HepG2 (cell line): ENCODE measurements at regions of chr16 and their contacts with region 1.

Region 1: DNA sequence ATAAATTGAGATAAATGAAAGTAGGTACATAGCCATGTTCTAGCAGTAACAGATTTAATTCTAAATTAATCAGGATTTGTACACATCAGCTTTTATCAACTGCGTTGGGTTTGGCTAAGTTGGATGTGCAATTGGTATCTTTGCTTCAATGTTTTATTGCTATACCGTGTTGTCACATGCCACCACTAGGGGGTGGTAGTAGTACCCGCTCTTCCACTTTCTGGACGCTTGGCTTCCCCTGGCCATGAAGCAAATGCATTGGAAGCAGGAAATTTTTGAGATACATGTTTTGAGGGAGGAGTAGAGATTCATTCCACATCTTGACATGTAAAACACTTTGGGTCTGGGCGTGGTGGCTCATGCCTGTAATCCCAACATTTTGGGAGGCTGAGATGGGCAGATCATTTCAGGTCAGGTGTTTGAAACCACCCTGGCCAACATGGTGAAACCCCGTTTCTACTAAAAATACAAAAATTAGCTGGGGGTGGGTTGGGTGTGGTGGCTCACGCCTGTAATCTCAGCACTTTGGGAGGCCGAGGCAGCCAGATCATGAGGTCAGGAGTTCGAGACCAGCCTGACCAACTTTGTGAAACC is 58.6 kb downstream of the EMP2 start:
- DNase-seq: peak; percentile 79
- ATAC-seq: peak; percentile 42
- H3K4me3 ChIP-seq: no peak overlapping the region
- H3K27ac ChIP-seq: no peak overlapping the region
- H3K4me1 ChIP-seq: peaks cover 27% of the 10 kb centered on the region
- H3K27me3 ChIP-seq: no peaks in the 10 kb centered on the region
- CTCF ChIP-seq: peak; percentile 93
- EP300 ChIP-seq: no peak
- POLR2A ChIP-seq: no peak
- RAD21 ChIP-seq: peak; percentile 58; the same call in 1 of the 2 replicates

Region 2: DNA sequence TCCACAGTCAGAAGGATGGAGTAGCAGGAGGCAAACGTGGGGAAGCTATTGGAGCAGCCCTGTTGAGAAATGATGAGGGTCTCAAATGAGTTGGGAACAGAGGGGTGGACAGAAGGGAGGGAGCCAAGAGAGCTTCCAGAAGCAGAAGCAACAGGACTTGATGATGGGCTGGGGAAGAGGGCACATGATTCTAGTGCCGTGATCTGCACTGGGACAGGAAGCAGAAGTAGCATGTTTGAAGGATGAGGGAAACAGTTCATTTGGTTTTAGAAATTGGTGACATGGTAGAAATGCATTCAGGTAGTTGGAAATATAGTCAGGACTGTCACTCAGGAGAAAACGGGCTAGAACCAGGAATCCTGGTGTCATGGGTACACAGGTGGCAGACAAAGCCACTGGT is 39.2 kb after region 1 on chr16:
- CTCF ChIA-PET with region 1: no interaction called
- POLR2A ChIA-PET with region 1: no interaction called
- in situ Hi-C with region 1: no loop called
- intact Hi-C with region 1: loop called (anchors 5 kb)
- DNase-seq: no peak
- ATAC-seq: no peak
- H3K4me3 ChIP-seq: no peak overlapping the region
- H3K27ac ChIP-seq: no peak overlapping the region
- H3K4me1 ChIP-seq: peaks cover 37% of the 10 kb centered on the region
- H3K27me3 ChIP-seq: no peaks in the 10 kb centered on the region
- CTCF ChIP-seq: no peak
- EP300 ChIP-seq: no peak
- POLR2A ChIP-seq: no peak
- RAD21 ChIP-seq: no peak

Region 3: DNA sequence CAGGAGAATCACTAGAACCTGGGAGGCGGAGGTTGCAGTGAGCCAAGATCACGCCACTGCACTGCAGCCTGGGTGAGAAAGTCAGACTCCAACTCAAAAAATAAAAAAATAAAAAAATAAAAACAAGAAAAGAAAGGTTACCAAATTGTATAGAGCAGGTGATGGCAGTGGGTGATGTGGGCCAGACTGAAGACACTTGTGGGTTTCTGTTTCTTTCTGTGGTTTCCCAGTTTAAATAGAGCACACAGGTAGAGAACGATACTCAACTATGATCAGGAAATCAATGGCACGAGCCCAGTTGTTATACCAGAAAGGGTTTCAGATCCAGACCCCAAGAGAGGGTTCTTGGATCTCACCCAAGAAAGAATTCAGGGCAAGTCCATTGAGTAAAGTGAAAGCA is 254.5 kb after region 1 on chr16:
- CTCF ChIA-PET with region 1: no interaction called
- POLR2A ChIA-PET with region 1: no interaction called
- in situ Hi-C with region 1: no loop called
- intact Hi-C with region 1: no loop called
- DNase-seq: no peak
- ATAC-seq: no peak
- H3K4me3 ChIP-seq: no peak overlapping the region
- H3K27ac ChIP-seq: no peak overlapping the region
- H3K4me1 ChIP-seq: peaks cover 11% of the 10 kb centered on the region
- H3K27me3 ChIP-seq: peaks cover 2 to 27% of the 10 kb centered on the region in 2 experiments; a peak in 4 of 5 replicates
- CTCF ChIP-seq: no peak
- EP300 ChIP-seq: no peak
- POLR2A ChIP-seq: no peak
- RAD21 ChIP-seq: no peak